B cell (primary cell): ENCODE measurements at regions of chr9 and their contacts with region 1.

Region 1: DNA sequence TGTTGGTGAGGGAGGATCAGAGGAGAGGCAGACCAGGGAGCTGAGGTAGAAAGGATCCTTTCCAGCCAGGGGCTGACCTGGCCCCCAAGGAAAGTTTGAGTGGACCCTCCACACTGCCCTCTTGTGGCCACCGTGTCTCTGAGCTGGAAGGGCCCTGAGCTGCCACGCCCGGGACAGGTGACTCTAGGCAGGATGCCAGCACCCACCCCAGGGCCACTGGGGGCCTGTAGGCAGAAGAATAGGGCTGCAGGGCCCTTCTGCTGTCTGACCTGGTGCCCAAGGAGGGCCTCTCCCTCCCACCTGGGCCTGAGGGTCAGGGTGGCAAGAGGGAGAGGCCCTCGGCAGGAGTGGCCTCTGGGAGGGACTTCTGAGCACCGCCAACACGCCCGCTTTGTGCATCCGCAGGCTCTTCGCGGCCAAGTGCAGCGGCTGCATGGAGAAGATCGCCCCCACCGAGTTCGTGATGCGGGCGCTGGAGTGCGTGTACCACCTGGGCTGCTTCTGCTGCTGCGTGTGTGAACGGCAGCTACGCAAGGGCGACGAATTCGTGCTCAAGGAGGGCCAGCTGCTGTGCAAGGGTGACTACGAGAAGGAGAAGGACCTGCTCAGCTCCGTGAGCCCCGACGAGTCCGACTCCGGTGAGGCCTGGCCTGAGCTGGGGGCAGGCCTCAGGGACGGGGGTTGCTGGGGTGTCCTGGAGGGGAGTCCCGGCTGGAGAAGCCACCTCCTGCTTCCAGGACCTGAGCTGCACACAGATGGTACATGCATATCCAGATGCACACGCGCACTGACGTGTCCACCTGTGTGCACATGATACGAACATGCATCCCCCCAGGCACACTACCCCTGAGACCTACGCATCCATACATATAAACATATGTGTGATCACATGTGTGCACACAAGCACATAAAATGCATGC is 77.0 kb downstream of the LMX1B start:
- DNase-seq: peak; percentile 61
- ATAC-seq: peak; percentile 60
- H3K4me3 ChIP-seq: no peak overlapping the region
- H3K4me3 Mint-ChIP-seq: no peak overlapping the region
- H3K27ac ChIP-seq: no peak overlapping the region
- H3K27ac Mint-ChIP-seq: no peak overlapping the region
- H3K4me1 ChIP-seq: no peaks in the 10 kb centered on the region
- H3K4me1 Mint-ChIP-seq: no peaks in the 10 kb centered on the region
- H3K27me3 ChIP-seq: peaks cover 0 to 44% (median 2%) of the 10 kb centered on the region in 4 experiments
- H3K27me3 Mint-ChIP-seq: peaks cover 29% of the 10 kb centered on the region
- CTCF ChIP-seq: peak; percentile 73

Region 2: DNA sequence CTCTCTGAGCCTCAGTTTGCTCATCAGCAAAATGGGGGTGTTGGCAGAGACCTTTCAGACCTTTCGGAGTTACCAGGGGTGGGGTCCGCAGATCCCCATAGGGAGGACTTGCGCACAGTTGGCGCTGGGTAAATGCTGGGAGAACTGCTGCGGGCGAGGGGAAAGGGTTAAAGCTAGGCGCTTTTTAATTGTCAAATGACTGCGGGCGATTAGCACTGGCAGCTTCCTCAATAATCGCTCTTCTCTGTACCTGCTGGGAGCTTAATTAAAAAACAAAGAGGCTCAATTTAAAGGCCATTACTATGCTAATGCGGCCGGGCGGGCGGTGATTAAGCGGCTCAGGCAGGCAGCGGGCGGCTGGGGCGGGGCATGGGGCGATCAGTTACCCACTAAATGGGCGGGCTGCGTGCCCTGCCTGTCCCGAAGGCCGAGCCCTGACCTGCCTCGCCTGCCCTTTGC is 14.0 kb before region 1 on chr9:
- CTCF ChIA-PET with region 1: interaction called, 15 read pairs
- POLR2A ChIA-PET with region 1: no interaction called
- intact Hi-C with region 1: no loop called
- DNase-seq: no peak
- ATAC-seq: no peak
- H3K4me3 ChIP-seq: no peak overlapping the region
- H3K4me3 Mint-ChIP-seq: no peak overlapping the region
- H3K27ac ChIP-seq: no peak overlapping the region
- H3K27ac Mint-ChIP-seq: no peak overlapping the region
- H3K4me1 ChIP-seq: peaks cover 0 to 15% of the 10 kb centered on the region in 2 donors
- H3K4me1 Mint-ChIP-seq: peaks cover 7% of the 10 kb centered on the region
- H3K27me3 ChIP-seq: peaks cover 0 to 82% (median 41%) of the 10 kb centered on the region in 4 experiments
- H3K27me3 Mint-ChIP-seq: peaks cover 75% of the 10 kb centered on the region
- CTCF ChIP-seq: no peak